ENCODE measurements at regions of chr16 and their contacts with region 1.

Region 1: GRCh38 chr16:58755989-58756649 is 22.0 kb upstream of the GOT2 start:
- DNase-seq: peak; percentile 56 to 82 (median 60)
- H3K4me3 ChIP-seq: peak overlapping the region; percentile 41
- H3K4me3 Mint-ChIP-seq: peak overlapping the region in 6 of 7 donors; percentile 56 to 73 (median 62)
- H3K27ac ChIP-seq: no peak overlapping the region
- H3K27ac Mint-ChIP-seq: peak overlapping the region; percentile 16 to 87 (median 74)
- H3K4me1 ChIP-seq: peaks cover 5% of the 10 kb centered on the region
- H3K4me1 Mint-ChIP-seq: peaks cover 9 to 10% (median 9%) of the 10 kb centered on the region in 3 donors
- H3K27me3 ChIP-seq: no peaks in the 10 kb centered on the region
- H3K27me3 Mint-ChIP-seq: peaks cover 0 to 3% of the 10 kb centered on the region in 2 donors

Region 2: GRCh38 chr16:58336332-58337089 is 419.6 kb before region 1 on chr16:
- CTCF ChIA-PET with region 1: interaction called, 35 read pairs
- POLR2A ChIA-PET with region 1: no interaction called
- DNase-seq: peak; percentile 68 to 84 (median 72)
- H3K4me3 ChIP-seq: no peak overlapping the region
- H3K4me3 Mint-ChIP-seq: peak overlapping the region in 3 of 7 donors; percentile 56 to 58 (median 57)
- H3K27ac ChIP-seq: no peak overlapping the region
- H3K27ac Mint-ChIP-seq: no peak overlapping the region
- H3K4me1 ChIP-seq: no peaks in the 10 kb centered on the region
- H3K4me1 Mint-ChIP-seq: peaks cover 7 to 8% (median 8%) of the 10 kb centered on the region in 3 donors
- H3K27me3 ChIP-seq: no peaks in the 10 kb centered on the region
- H3K27me3 Mint-ChIP-seq: peaks cover 5 to 15% of the 10 kb centered on the region in 2 donors

Region 3: DNA sequence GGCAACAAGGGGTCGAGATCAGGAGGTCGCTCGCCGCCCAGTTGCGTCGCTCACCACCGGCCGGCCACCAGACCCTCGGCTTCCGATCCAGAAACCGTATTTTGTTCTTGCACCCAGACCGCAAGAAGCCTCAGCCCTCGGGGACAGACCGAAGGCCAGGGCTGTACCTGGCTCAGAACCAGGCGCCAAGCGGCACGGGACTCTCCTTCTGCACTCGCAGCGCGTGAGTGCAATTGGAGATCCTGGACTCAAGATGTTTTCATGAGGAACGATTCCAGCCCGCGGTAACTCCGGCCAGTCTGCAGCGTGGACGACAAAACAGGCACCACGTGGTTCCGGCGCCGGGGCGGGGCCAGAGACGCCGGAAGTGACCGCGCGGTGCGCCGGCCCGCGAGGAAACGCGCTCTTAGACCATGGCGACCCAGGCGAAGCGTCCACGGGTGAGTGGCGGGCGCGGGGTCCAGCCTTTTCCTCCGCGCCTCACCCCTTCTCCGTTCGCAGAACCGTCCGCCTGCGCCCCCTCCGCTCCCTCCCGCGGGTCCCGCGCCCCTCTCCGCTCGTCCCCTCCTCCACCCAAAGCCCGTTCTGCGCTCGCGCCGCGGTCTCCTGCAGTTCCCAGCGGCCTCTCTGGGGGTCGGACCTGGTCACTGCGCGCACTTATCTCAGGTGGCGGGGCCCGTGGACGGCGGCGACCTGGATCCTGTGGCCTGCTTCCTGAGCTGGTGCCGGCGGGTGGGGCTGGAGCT is 240.8 kb before region 1 on chr16 and contains the start of gene SETD6:
- CTCF ChIA-PET with region 1: interaction called, 35 read pairs
- POLR2A ChIA-PET with region 1: interaction called, 4 read pairs
- DNase-seq: peak; percentile 56 to 78 (median 67)
- H3K4me3 ChIP-seq: peak within 1 kb of the TSS; percentile 92
- H3K4me3 Mint-ChIP-seq: peak within 1 kb of the TSS; percentile 88 to 96 (median 90)
- H3K27ac ChIP-seq: peak within 1 kb of the TSS; percentile 75
- H3K27ac Mint-ChIP-seq: peak within 1 kb of the TSS; percentile 85 to 94 (median 88)
- H3K4me1 ChIP-seq: peaks cover 17% of the 10 kb centered on the region
- H3K4me1 Mint-ChIP-seq: peaks cover 17 to 22% (median 19%) of the 10 kb centered on the region in 3 donors
- H3K27me3 ChIP-seq: no peaks in the 10 kb centered on the region
- H3K27me3 Mint-ChIP-seq: no peaks in the 10 kb centered on the region
- total RNA-seq, gene SETD6: 23.8 to 24.9 TPM

Region 4: GRCh38 chr16:58699151-58699550 is 57.0 kb before region 1 on chr16:
- CTCF ChIA-PET with region 1: no interaction called
- POLR2A ChIA-PET with region 1: no interaction called
- DNase-seq: no peak
- H3K4me3 ChIP-seq: no peak overlapping the region
- H3K4me3 Mint-ChIP-seq: no peak overlapping the region
- H3K27ac ChIP-seq: no peak overlapping the region
- H3K27ac Mint-ChIP-seq: peak overlapping the region in 2 of 8 donors; percentile 22 to 29
- H3K4me1 ChIP-seq: no peaks in the 10 kb centered on the region
- H3K4me1 Mint-ChIP-seq: peaks cover 0 to 4% (median 2%) of the 10 kb centered on the region in 3 donors
- H3K27me3 ChIP-seq: no peaks in the 10 kb centered on the region
- H3K27me3 Mint-ChIP-seq: peaks cover 0 to 3% of the 10 kb centered on the region in 2 donors

Region 5: GRCh38 chr16:58744497-58744896 is 11.6 kb before region 1 on chr16:
- CTCF ChIA-PET with region 1: interaction called, 21 read pairs
- POLR2A ChIA-PET with region 1: no interaction called
- DNase-seq: no peak
- H3K4me3 ChIP-seq: no peak overlapping the region
- H3K4me3 Mint-ChIP-seq: no peak overlapping the region
- H3K27ac ChIP-seq: no peak overlapping the region
- H3K27ac Mint-ChIP-seq: no peak overlapping the region
- H3K4me1 ChIP-seq: no peaks in the 10 kb centered on the region
- H3K4me1 Mint-ChIP-seq: no peaks in the 10 kb centered on the region
- H3K27me3 ChIP-seq: no peaks in the 10 kb centered on the region
- H3K27me3 Mint-ChIP-seq: peaks cover 0 to 6% of the 10 kb centered on the region in 2 donors